ENCODE measurements at regions of chr9 and their contacts with region 1.

Region 1: GRCh38 chr9:32954642-32955041 is 46.8 kb downstream of the APTX start:
- DNase-seq: no peak
- ATAC-seq: no peak
- H3K4me3 ChIP-seq: no peak overlapping the region
- H3K27ac ChIP-seq: no peak overlapping the region
- H3K4me1 ChIP-seq: no peaks in the 10 kb centered on the region
- H3K27me3 ChIP-seq: no peaks in the 10 kb centered on the region
- CTCF ChIP-seq: no peak
- EP300 ChIP-seq: no peak
- POLR2A ChIP-seq: no peak
- RAD21 ChIP-seq: no peak

Region 2: DNA sequence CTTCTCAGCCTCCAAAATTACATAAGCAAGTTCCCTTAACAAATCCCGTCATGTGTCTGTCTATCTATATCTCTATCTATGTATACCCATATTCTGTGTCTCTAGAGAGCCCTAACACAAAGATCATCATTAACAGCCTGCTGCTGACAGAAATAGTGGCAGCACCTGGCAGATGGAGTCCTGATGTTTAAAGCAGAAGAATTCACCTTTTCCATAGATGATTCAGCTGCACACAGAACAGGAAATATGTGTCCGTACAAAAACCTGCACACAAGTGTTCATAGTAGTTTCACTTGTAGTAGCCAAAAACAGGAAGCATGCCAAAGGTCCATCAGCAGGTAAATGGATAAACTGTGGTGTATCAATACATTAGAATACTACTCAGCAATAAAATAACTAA is 615.2 kb before region 1 on chr9:
- CTCF ChIA-PET with region 1: no interaction called
- POLR2A ChIA-PET with region 1: no interaction called
- RAD21 ChIA-PET with region 1: no interaction called
- SMC1A ChIA-PET with region 1: no interaction called
- in situ Hi-C with region 1: no loop called
- intact Hi-C with region 1: no loop called
- DNase-seq: peak; percentile 12
- ATAC-seq: peak; percentile 68
- H3K4me3 ChIP-seq: no peak overlapping the region
- H3K27ac ChIP-seq: no peak overlapping the region
- H3K4me1 ChIP-seq: no peaks in the 10 kb centered on the region
- H3K27me3 ChIP-seq: no peaks in the 10 kb centered on the region; a peak in 1 of 4 replicates
- CTCF ChIP-seq: no peak
- EP300 ChIP-seq: no peak
- POLR2A ChIP-seq: no peak
- RAD21 ChIP-seq: no peak

Region 3: DNA sequence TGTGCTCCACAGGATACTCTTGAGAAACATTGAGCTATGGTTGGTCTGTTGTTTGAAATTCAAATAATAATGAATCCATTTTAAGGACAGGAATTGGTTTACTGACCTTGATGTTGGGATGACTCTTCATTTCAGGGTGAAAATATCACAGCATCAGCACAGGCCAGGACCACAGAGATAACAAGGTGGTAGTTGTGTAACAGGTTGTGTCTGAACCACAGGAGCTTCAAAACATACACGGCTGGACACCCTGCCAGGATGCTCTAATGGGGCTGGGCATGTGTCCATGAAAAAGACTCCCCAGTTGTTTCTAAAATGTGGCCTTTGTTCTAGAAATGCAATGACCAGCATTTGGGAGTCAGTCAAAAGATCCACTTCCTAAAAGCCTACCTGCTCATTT is 500.4 kb before region 1 on chr9:
- CTCF ChIA-PET with region 1: no interaction called
- POLR2A ChIA-PET with region 1: no interaction called
- RAD21 ChIA-PET with region 1: no interaction called
- SMC1A ChIA-PET with region 1: no interaction called
- in situ Hi-C with region 1: no loop called
- intact Hi-C with region 1: no loop called
- DNase-seq: no peak
- ATAC-seq: no peak
- H3K4me3 ChIP-seq: no peak overlapping the region
- H3K27ac ChIP-seq: no peak overlapping the region
- H3K4me1 ChIP-seq: no peaks in the 10 kb centered on the region
- H3K27me3 ChIP-seq: no peaks in the 10 kb centered on the region
- CTCF ChIP-seq: no peak
- EP300 ChIP-seq: no peak
- POLR2A ChIP-seq: no peak
- RAD21 ChIP-seq: no peak

Region 4: DNA sequence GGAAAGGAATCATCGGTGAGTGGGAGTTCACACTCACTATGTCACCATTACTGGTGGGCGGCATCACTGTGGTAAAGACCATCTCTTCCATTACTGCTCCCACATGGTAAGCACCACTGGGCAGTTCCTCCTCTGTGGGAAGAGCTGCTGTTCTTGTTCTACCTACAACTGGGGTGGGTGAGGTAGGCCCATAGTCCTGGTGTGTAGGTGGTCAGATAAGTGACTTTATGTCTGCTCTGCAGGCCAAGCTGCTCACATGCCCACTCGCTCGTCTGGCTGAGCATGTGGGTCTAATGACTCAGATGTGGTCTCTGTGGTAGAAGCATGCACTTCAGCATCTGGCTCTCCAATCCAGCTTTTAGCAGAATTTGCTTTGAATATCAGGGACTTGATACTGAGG is 88.4 kb before region 1 on chr9:
- CTCF ChIA-PET with region 1: no interaction called
- POLR2A ChIA-PET with region 1: no interaction called
- RAD21 ChIA-PET with region 1: no interaction called
- SMC1A ChIA-PET with region 1: no interaction called
- in situ Hi-C with region 1: no loop called
- intact Hi-C with region 1: no loop called
- DNase-seq: no peak
- ATAC-seq: no peak
- H3K4me3 ChIP-seq: no peak overlapping the region
- H3K27ac ChIP-seq: no peak overlapping the region
- H3K4me1 ChIP-seq: no peaks in the 10 kb centered on the region
- H3K27me3 ChIP-seq: no peaks in the 10 kb centered on the region
- CTCF ChIP-seq: no peak
- EP300 ChIP-seq: no peak
- POLR2A ChIP-seq: no peak
- RAD21 ChIP-seq: no peak

Region 5: DNA sequence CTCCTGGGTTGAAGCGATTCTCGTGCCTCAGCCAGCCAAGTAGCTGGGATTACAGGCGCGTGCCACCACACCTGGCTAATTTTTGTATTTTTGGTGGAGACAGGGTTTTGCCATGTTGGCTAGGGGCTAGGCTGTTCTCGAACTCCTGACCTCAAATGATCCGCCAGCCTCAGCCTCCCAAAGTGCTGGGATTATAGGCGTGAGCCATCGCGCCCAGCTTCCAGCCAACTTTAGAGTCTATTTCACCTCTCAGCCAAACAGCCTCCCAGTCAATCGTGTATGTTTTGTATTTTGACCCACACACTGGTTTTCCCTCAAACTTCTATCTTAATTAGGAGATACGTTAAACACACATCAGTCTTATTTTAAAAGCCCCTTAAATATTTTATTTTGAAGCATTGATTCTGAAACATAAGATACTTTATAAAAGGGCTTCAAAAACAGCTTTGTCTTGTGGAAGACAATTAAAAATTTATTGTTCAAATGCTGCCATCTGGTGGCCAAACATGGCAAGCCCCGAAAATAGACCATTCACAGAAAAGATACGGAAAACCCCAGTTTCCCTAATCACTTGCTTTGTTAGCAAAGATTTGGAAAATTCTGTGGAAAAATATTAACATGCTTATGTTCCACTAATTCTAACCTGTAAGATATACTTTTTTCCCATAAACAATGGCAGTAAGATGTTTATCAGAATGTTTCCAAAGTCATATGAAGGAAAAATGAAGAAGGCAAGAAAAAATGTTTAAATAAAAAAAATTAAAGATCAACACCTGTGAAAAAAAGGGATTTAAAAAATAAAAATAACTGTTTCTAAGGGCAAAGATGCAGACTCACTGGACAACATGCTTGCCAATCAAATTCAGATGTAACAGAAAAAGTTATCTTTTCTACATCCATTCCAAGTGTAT is 13.7 kb after region 1 on chr9:
- CTCF ChIA-PET with region 1: interaction called, 12 read pairs
- POLR2A ChIA-PET with region 1: no interaction called
- RAD21 ChIA-PET with region 1: no interaction called
- SMC1A ChIA-PET with region 1: interaction called, 3 read pairs
- in situ Hi-C with region 1: no loop called
- intact Hi-C with region 1: no loop called
- DNase-seq: no peak
- ATAC-seq: peak; percentile 61
- H3K4me3 ChIP-seq: no peak overlapping the region
- H3K27ac ChIP-seq: no peak overlapping the region
- H3K4me1 ChIP-seq: no peaks in the 10 kb centered on the region
- H3K27me3 ChIP-seq: no peaks in the 10 kb centered on the region
- CTCF ChIP-seq: peak; percentile 61 to 73 (median 72)
- EP300 ChIP-seq: no peak
- POLR2A ChIP-seq: no peak
- RAD21 ChIP-seq: peak; percentile 75

Measured in GM12878 (cell line).